ENCODE measurements at regions of chr6 and their contacts with region 1.

Region 1: DNA sequence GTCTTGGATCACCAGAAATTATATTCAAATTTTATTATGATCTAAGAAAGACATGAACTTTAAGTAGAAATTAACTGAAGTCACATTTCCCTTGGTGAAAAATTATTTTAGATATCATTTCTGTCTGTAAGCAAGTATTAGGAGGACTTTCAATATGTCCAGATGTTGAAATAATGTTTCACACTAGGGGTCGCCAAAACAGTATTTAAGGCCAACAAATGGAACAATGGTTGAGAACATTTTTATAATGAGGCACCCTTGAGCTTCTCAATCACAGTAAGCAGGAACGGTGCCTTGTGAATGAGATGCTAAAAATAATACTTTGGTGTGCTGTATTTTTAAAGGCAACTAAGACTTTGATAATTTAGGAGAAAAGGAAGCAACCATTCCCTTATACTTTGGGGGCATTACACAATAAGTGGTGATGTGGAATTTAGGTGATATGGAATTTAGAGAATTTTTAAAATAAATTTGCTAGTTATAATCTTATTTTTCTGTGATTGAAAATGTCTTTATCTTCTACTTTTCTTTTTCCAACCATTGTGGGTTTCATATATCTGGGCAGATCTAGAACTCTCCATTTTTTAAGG is 9.6 kb upstream of the SF3B5 start:
- DNase-seq: no peak
- H3K4me3 ChIP-seq: no peak overlapping the region
- H3K27ac ChIP-seq: no peak overlapping the region
- H3K4me1 ChIP-seq: no peaks in the 10 kb centered on the region
- H3K27me3 ChIP-seq: no peaks in the 10 kb centered on the region
- CTCF ChIP-seq: peak; percentile 52 to 61 (median 52)
- EP300 ChIP-seq: no peak
- POLR2A ChIP-seq: no peak

Region 2: GRCh38 chr6:144149891-144150709 is 45.1 kb after region 1 on chr6 and contains the start of gene STX11:
- intact Hi-C with region 1: loop called (anchors 5 kb)
- DNase-seq: peak; percentile 78
- H3K4me3 ChIP-seq: peak within 1 kb of the TSS; percentile 52 to 82 (median 67)
- H3K27ac ChIP-seq: peak within 1 kb of the TSS; percentile 36 to 72 (median 46)
- H3K4me1 ChIP-seq: peaks cover 0 to 12% (median 8%) of the 10 kb centered on the region in 4 donors
- H3K27me3 ChIP-seq: no peaks in the 10 kb centered on the region
- CTCF ChIP-seq: no peak
- EP300 ChIP-seq: no peak
- POLR2A ChIP-seq: no peak
- total RNA-seq, gene STX11: 3.4 to 5.6 (median 4.8) TPM

Region 3: DNA sequence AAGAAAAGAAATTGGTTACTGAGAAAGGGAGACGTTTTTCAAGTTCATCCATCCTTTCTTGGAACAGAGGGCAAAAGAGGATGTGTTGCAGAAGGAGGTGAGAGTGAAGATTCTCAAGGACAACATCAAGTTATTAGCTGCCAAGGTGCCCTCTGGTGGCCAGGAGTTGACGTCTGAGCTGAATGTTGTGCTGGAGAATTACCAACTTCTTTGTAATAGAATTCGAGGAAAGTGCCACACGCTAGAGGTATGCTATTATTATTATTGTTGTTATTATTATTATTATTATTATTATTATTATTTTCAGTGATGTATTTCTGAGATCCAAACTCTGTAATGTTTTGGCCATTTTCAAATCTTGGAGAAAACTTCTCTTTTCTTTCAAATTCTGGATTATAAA is 377.1 kb after region 1 on chr6:
- intact Hi-C with region 1: loop called (anchors 2 kb)
- DNase-seq: peak; percentile 79
- H3K4me3 ChIP-seq: no peak overlapping the region
- H3K27ac ChIP-seq: no peak overlapping the region
- H3K4me1 ChIP-seq: no peaks in the 10 kb centered on the region
- H3K27me3 ChIP-seq: no peaks in the 10 kb centered on the region
- CTCF ChIP-seq: peak in 3 of 4 experiments; percentile 26 to 56 (median 32)
- EP300 ChIP-seq: no peak
- POLR2A ChIP-seq: no peak

Measured in sigmoid colon (tissue), 7 donors.